ENCODE measurements at regions of chr3 and their contacts with region 1.

Region 1: GRCh38 chr3:27134165-27134796 is 234.9 kb downstream of the NEK10 start:
- DNase-seq: peak in 1 of 2 experiments; percentile 72
- H3K4me3 ChIP-seq: no peak overlapping the region
- H3K27ac ChIP-seq: no peak overlapping the region
- H3K4me1 ChIP-seq: no peaks in the 10 kb centered on the region
- H3K27me3 ChIP-seq: no peaks in the 10 kb centered on the region
- CTCF ChIP-seq: peak; percentile 76 to 97 (median 89)
- EP300 ChIP-seq: no peak
- POLR2A ChIP-seq: no peak
- RAD21 ChIP-seq: peak; percentile 96 to 98

Region 2: GRCh38 chr3:27046351-27046750 is 87.9 kb before region 1 on chr3:
- CTCF ChIA-PET with region 1: no interaction called
- POLR2A ChIA-PET with region 1: no interaction called
- DNase-seq: no peak
- H3K4me3 ChIP-seq: no peak overlapping the region
- H3K27ac ChIP-seq: no peak overlapping the region
- H3K4me1 ChIP-seq: peaks cover 3 to 15% (median 6%) of the 10 kb centered on the region in 4 experiments; a peak in 5 of 7 replicates
- H3K27me3 ChIP-seq: no peaks in the 10 kb centered on the region
- CTCF ChIP-seq: no peak
- EP300 ChIP-seq: no peak
- POLR2A ChIP-seq: no peak
- RAD21 ChIP-seq: no peak

Region 3: GRCh38 chr3:27147215-27147614 is 12.9 kb after region 1 on chr3:
- CTCF ChIA-PET with region 1: interaction called, 25 read pairs
- POLR2A ChIA-PET with region 1: no interaction called
- DNase-seq: no peak
- H3K4me3 ChIP-seq: no peak overlapping the region
- H3K27ac ChIP-seq: no peak overlapping the region
- H3K4me1 ChIP-seq: no peaks in the 10 kb centered on the region
- H3K27me3 ChIP-seq: no peaks in the 10 kb centered on the region
- CTCF ChIP-seq: no peak
- EP300 ChIP-seq: no peak
- POLR2A ChIP-seq: no peak
- RAD21 ChIP-seq: no peak

Region 4: DNA sequence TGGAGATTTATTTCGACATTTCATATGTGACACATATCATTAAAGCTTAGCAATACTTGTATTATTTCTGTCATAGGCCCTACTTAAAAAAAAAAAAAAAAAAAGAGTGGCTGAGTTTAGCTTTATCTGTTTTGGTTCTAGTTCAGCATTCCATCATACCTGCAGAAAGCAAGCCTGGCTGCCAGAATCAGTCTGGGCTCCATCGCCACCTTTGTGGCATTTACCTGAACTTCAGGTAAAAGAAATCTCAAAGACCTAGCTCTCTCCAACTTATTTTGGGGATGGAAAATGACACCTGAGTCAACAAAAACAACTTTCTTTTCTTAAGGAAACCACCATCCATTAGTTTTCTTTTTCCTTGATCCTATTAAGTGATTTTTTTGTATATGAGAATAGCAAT is 152.8 kb after region 1 on chr3:
- CTCF ChIA-PET with region 1: interaction called, 12 read pairs
- POLR2A ChIA-PET with region 1: no interaction called
- DNase-seq: no peak
- H3K4me3 ChIP-seq: no peak overlapping the region
- H3K27ac ChIP-seq: no peak overlapping the region
- H3K4me1 ChIP-seq: no peaks in the 10 kb centered on the region
- H3K27me3 ChIP-seq: no peaks in the 10 kb centered on the region
- CTCF ChIP-seq: peak in 2 of 3 experiments; percentile 10 to 27; a peak in 2 of 4 replicates
- EP300 ChIP-seq: no peak
- POLR2A ChIP-seq: no peak
- RAD21 ChIP-seq: peak; percentile 43 to 46

Measured in H1 (cell line).